PC-9 (cell line): ENCODE measurements at regions of chr1 and their contacts with region 1.

Region 1: DNA sequence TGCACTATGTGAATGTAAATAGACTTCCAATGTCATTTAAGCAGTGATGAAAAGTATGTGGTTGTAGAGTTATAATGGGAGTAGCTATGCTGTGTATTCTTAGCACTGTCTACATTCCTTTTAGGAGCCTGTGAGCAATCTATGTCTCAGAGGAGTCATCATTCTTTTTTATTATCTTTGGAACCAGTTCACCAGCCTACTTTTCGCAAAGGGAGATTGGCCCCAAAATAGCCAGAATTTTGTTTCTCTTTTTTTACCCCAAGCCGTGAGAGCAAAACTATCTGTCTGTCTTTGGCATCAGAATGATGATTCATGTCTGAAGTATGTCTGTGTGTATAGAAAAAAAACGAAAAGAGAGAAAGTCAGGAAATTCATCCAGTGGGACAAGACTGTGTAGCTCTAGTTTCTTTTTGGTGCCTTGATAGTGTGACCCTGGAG is 44.2 kb downstream of the OSBPL9 start:
- DNase-seq: peak; percentile 27 to 67
- H3K4me3 ChIP-seq: peak overlapping the region; percentile 19; the same call in 1 of the 2 replicates
- H3K27ac ChIP-seq: peak overlapping the region; percentile 57
- H3K4me1 ChIP-seq: peaks cover 32% of the 10 kb centered on the region
- H3K27me3 ChIP-seq: no peaks in the 10 kb centered on the region
- CTCF ChIP-seq: no peak

Region 2: GRCh38 chr1:51671527-51672325 is 10.6 kb after region 1 on chr1:
- CTCF ChIA-PET with region 1: no interaction called
- POLR2A ChIA-PET with region 1: no interaction called
- intact Hi-C with region 1: loop called (anchors 1 kb)
- DNase-seq: peak in 1 of 2 experiments; percentile 34
- H3K4me3 ChIP-seq: no peak overlapping the region
- H3K27ac ChIP-seq: no peak overlapping the region
- H3K4me1 ChIP-seq: peaks cover 13% of the 10 kb centered on the region
- H3K27me3 ChIP-seq: no peaks in the 10 kb centered on the region
- CTCF ChIP-seq: no peak

Region 3: DNA sequence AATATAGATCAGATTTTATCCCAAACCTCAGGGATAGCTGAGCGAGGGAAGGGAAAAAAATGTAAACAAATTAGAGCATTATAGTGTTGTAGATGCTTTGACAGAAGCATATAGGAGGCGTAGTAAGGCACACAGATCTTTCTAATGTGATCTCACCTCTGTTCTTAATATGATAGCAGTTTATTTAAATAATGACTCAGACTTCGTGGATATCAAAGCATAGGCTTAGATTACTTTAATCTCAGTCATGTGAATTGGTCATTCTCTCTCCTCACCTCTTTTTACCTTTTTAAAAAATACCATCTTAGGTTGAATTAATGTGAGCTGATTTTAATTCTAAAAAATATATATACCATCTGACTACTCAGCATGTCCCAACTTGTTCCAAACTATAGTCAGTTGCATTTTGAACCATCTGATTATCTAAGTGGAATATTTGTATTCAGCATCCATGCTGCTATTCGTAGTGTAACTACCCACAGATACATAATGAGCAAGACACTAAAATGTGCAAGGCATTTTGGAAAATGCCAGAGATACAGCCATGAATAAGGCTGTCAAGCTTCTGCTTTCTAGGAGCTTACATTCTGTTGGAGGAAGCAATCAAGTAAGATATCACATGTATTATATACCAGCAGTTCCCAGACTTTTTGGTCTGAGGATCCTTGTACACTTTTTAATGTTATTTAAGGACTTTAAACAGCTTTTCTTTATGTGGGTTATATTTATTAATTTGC is 32.5 kb after region 1 on chr1:
- CTCF ChIA-PET with region 1: no interaction called
- POLR2A ChIA-PET with region 1: no interaction called
- intact Hi-C with region 1: no loop called
- DNase-seq: peak in 1 of 2 experiments; percentile 52
- H3K4me3 ChIP-seq: no peak overlapping the region
- H3K27ac ChIP-seq: 0 out of 2 replicates have a peak overlapping the region, but pooled peaks have one; percentile 5
- H3K4me1 ChIP-seq: peaks cover 46% of the 10 kb centered on the region
- H3K27me3 ChIP-seq: no peaks in the 10 kb centered on the region
- CTCF ChIP-seq: no peak

Region 4: GRCh38 chr1:51729156-51729823 is 68.2 kb after region 1 on chr1:
- CTCF ChIA-PET with region 1: no interaction called
- POLR2A ChIA-PET with region 1: interaction called, 3 read pairs
- intact Hi-C with region 1: loop called (anchors 5 kb)
- DNase-seq: peak; percentile 91 to 99
- H3K4me3 ChIP-seq: peak overlapping the region; percentile 60
- H3K27ac ChIP-seq: peak overlapping the region; percentile 66
- H3K4me1 ChIP-seq: peaks cover 48% of the 10 kb centered on the region
- H3K27me3 ChIP-seq: no peaks in the 10 kb centered on the region
- CTCF ChIP-seq: no peak